Caco-2 (cell line): ENCODE measurements at regions of chr20 and their contacts with region 1.

Region 1: GRCh38 chr20:22586645-22587310 is 2.4 kb upstream of the FOXA2 start:
- DNase-seq: peak; percentile 62 to 72
- H3K4me3 ChIP-seq: no peak overlapping the region
- H3K4me3 Mint-ChIP-seq: no peak overlapping the region
- H3K27ac Mint-ChIP-seq: no peak overlapping the region
- H3K4me1 ChIP-seq: peaks cover 13% of the 10 kb centered on the region
- H3K4me1 Mint-ChIP-seq: peaks cover 7% of the 10 kb centered on the region
- H3K27me3 ChIP-seq: no peaks in the 10 kb centered on the region
- H3K27me3 Mint-ChIP-seq: peaks cover 6% of the 10 kb centered on the region
- CTCF ChIP-seq: peak; percentile 77 to 78

Region 2: GRCh38 chr20:22339091-22339881 is 247.5 kb before region 1 on chr20:
- CTCF ChIA-PET with region 1: interaction called, 7 read pairs
- POLR2A ChIA-PET with region 1: no interaction called
- intact Hi-C with region 1: loop called (anchors 1 kb)
- DNase-seq: peak; percentile 67 to 82
- H3K4me3 ChIP-seq: no peak overlapping the region
- H3K4me3 Mint-ChIP-seq: peak overlapping the region; percentile 46
- H3K27ac Mint-ChIP-seq: peak overlapping the region; percentile 32
- H3K4me1 ChIP-seq: no peaks in the 10 kb centered on the region
- H3K4me1 Mint-ChIP-seq: peaks cover 12% of the 10 kb centered on the region
- H3K27me3 ChIP-seq: no peaks in the 10 kb centered on the region
- H3K27me3 Mint-ChIP-seq: no peaks in the 10 kb centered on the region
- CTCF ChIP-seq: peak; percentile 80 to 83

Region 3: DNA sequence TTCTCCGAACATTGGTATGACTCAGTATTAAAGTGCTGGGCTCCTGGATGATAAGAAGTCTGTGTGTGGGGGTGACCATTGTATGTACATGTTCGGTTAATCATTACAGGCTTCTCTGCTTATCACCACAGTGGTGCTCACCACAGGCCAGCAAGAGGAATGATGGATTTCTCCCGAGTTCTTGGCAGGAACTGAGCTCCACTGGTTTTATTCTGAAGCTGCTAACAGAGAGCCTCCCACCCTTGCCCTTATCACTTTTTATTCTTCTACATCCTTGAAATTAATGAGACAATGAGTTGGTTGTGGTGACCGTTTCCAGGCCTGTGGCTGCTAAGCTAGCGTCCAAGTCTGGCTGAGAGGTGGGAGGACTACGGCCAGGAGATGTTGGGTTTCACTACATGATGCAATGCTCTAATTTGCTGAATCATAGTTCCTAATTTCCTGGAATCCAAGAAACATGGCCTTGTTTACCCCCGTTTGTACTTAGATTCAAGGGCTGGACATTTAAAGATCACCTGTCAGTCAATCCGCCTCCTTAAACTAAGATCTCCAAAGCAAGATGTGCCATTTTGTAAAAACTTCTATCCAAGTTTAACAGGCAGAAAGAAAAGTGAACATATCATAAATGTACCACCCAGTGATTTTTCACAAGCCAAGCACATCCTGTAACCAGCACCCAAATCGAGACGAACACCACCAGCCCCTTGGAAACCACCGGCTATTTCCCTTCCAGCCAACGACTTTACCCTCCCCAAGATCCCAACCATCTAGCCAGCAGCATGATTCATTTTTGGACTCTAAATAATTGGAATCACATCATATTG is 174.9 kb before region 1 on chr20:
- CTCF ChIA-PET with region 1: no interaction called
- POLR2A ChIA-PET with region 1: interaction called, 4 read pairs
- intact Hi-C with region 1: loop called (anchors 1 kb)
- DNase-seq: peak; percentile 75 to 79
- H3K4me3 ChIP-seq: no peak overlapping the region
- H3K4me3 Mint-ChIP-seq: peak overlapping the region; percentile 42
- H3K27ac Mint-ChIP-seq: peak overlapping the region; percentile 96
- H3K4me1 ChIP-seq: peaks cover 52% of the 10 kb centered on the region
- H3K4me1 Mint-ChIP-seq: peaks cover 55% of the 10 kb centered on the region
- H3K27me3 ChIP-seq: no peaks in the 10 kb centered on the region
- H3K27me3 Mint-ChIP-seq: no peaks in the 10 kb centered on the region
- CTCF ChIP-seq: no peak

Region 4: DNA sequence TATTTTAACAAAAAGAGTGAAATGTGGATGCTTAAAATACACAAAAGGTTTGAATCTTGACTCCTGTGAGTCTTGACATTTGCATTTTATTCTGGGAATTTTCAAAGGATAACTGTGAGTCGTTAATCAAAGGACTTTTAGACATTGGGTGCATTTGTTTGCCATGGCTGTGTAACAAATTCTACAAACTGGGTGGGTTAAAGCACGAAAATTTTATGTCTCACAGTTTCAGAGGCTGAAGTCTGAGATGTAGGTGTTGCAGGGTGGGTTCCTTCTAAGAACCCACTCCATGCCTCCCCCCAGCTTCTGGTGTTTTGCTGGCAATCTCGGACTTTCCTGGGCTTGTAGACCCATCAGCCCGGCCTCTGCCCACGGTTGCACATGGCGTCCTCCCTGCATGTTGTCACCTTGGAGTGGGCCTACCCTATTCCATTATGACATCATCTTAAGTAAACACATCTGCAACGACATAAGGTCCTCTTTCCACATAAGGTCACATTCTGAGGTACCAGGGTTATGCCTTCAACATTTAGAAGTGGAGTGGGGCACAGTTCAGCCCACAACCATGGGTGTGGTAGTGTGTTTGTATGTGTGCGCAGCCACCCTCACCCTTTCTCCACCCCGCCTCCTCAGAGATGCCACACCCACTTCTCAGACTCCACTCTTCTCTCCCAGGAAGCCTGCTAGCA is 115.5 kb before region 1 on chr20:
- CTCF ChIA-PET with region 1: no interaction called
- POLR2A ChIA-PET with region 1: interaction called, 4 read pairs
- intact Hi-C with region 1: loop called (anchors 5 kb)
- DNase-seq: peak in 1 of 2 experiments; percentile 29
- H3K4me3 ChIP-seq: no peak overlapping the region
- H3K4me3 Mint-ChIP-seq: no peak overlapping the region
- H3K27ac Mint-ChIP-seq: peak overlapping the region; percentile 28
- H3K4me1 ChIP-seq: peaks cover 17% of the 10 kb centered on the region
- H3K4me1 Mint-ChIP-seq: peaks cover 11% of the 10 kb centered on the region
- H3K27me3 ChIP-seq: no peaks in the 10 kb centered on the region
- H3K27me3 Mint-ChIP-seq: no peaks in the 10 kb centered on the region
- CTCF ChIP-seq: no peak

Region 5: GRCh38 chr20:22511943-22512910 is 74.6 kb before region 1 on chr20:
- CTCF ChIA-PET with region 1: interaction called, 8 read pairs
- POLR2A ChIA-PET with region 1: interaction called, 33 read pairs
- intact Hi-C with region 1: loop called (anchors 1 kb)
- DNase-seq: peak; percentile 92 to 96
- H3K4me3 ChIP-seq: no peak overlapping the region
- H3K4me3 Mint-ChIP-seq: peak overlapping the region; percentile 35
- H3K27ac Mint-ChIP-seq: peak overlapping the region; percentile 50
- H3K4me1 ChIP-seq: peaks cover 71% of the 10 kb centered on the region
- H3K4me1 Mint-ChIP-seq: peaks cover 65% of the 10 kb centered on the region
- H3K27me3 ChIP-seq: no peaks in the 10 kb centered on the region
- H3K27me3 Mint-ChIP-seq: no peaks in the 10 kb centered on the region
- CTCF ChIP-seq: no peak

Region 6: GRCh38 chr20:22536956-22537756 is 49.6 kb before region 1 on chr20:
- CTCF ChIA-PET with region 1: no interaction called
- POLR2A ChIA-PET with region 1: no interaction called
- intact Hi-C with region 1: loop called (anchors 1 kb)
- DNase-seq: peak; percentile 76 to 80
- H3K4me3 ChIP-seq: no peak overlapping the region
- H3K4me3 Mint-ChIP-seq: peak overlapping the region; percentile 55
- H3K27ac Mint-ChIP-seq: peak overlapping the region; percentile 87
- H3K4me1 ChIP-seq: peaks cover 39% of the 10 kb centered on the region
- H3K4me1 Mint-ChIP-seq: peaks cover 40% of the 10 kb centered on the region
- H3K27me3 ChIP-seq: no peaks in the 10 kb centered on the region
- H3K27me3 Mint-ChIP-seq: no peaks in the 10 kb centered on the region
- CTCF ChIP-seq: no peak

Region 7: GRCh38 chr20:22567944-22568871 is 18.6 kb before region 1 on chr20:
- CTCF ChIA-PET with region 1: no interaction called
- POLR2A ChIA-PET with region 1: no interaction called
- intact Hi-C with region 1: no loop called
- DNase-seq: no peak
- H3K4me3 ChIP-seq: no peak overlapping the region
- H3K4me3 Mint-ChIP-seq: no peak overlapping the region
- H3K27ac Mint-ChIP-seq: no peak overlapping the region
- H3K4me1 ChIP-seq: peaks cover 37% of the 10 kb centered on the region
- H3K4me1 Mint-ChIP-seq: peaks cover 35% of the 10 kb centered on the region
- H3K27me3 ChIP-seq: no peaks in the 10 kb centered on the region
- H3K27me3 Mint-ChIP-seq: no peaks in the 10 kb centered on the region
- CTCF ChIP-seq: no peak

Region 8: DNA sequence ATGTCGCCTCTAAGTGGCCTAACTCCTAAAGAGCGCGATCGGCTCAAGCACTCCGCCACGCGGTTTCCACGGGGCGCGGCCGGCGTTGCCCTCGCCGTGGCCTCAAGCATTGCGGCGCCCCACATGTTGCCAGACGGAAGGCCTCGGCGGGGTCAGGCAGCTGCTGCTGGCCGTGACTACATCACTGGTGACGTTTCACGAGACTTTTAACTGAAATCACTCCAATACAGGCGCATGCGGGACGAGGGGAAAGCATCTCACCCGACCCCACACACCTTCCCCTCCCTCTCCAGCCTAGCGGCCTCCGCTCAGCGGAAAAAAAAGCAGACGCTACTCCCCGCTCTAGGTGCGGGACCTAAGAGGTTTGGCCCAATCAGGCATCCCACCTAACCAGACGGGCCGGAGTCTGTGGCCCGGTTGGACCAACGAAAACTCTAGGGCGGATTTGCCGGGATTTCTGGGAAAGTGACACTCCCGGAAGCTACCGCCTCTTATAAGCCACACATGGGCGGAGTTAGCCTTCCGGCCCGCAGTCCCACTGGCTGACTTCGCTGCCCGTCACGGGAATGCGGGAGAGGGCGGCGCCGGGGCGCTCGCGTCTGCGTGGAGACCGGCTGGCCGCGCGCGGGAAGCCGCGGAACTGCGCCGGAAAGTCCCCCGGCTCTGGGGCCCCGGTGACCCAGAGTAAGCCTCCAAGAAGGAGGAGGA is 763.6 kb after region 1 on chr20 and contains the start of gene NXT1:
- CTCF ChIA-PET with region 1: no interaction called
- POLR2A ChIA-PET with region 1: no interaction called
- intact Hi-C with region 1: loop called (anchors 10 kb)
- DNase-seq: peak; percentile 98 to 99
- H3K4me3 ChIP-seq: peak within 1 kb of the TSS; percentile 98
- H3K4me3 Mint-ChIP-seq: peak within 1 kb of the TSS; percentile 89
- H3K27ac Mint-ChIP-seq: peak within 1 kb of the TSS; percentile 100
- H3K4me1 ChIP-seq: peaks cover 17% of the 10 kb centered on the region
- H3K4me1 Mint-ChIP-seq: peaks cover 16% of the 10 kb centered on the region
- H3K27me3 ChIP-seq: no peaks in the 10 kb centered on the region
- H3K27me3 Mint-ChIP-seq: no peaks in the 10 kb centered on the region
- CTCF ChIP-seq: no peak
- total RNA-seq, gene NXT1: 33.6 and 34.1 TPM in 2 replicates